ENCODE measurements at regions of chr11 and their contacts with region 1.

Region 1: DNA sequence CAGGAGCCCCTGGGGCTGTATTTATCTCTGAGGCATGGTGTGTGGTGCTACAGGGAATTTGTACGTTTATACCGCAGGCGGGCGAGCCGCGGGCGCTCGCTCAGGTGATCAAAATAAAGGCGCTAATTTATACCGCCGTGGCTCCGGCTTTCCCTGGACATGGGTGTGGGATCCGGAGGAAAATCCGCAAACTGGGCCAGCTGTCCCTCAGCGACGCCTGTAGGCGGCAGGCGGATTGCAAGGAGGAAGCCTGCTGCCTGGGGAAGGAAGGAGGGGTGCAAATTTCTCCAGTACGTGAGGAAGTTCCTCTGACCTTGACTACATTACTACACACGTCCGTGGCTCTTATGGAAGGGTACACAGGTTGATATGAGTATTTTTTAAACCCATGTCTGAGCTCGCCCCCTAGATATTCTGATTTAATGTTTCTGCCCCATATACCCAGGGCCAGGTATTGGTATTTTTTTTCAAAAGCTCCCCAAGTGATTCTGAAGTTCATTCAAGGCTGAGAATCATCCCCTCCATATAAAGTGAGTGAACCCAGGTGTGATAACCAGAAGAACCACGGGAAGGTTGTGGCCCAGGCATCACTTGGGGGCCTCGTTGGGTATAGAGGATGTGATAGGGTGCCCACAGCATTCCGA is 2.8 kb downstream of the MYOD1 start:
- DNase-seq: peak; percentile 38
- H3K27ac ChIP-seq: no peak overlapping the region
- CTCF ChIP-seq: no peak

Region 2: DNA sequence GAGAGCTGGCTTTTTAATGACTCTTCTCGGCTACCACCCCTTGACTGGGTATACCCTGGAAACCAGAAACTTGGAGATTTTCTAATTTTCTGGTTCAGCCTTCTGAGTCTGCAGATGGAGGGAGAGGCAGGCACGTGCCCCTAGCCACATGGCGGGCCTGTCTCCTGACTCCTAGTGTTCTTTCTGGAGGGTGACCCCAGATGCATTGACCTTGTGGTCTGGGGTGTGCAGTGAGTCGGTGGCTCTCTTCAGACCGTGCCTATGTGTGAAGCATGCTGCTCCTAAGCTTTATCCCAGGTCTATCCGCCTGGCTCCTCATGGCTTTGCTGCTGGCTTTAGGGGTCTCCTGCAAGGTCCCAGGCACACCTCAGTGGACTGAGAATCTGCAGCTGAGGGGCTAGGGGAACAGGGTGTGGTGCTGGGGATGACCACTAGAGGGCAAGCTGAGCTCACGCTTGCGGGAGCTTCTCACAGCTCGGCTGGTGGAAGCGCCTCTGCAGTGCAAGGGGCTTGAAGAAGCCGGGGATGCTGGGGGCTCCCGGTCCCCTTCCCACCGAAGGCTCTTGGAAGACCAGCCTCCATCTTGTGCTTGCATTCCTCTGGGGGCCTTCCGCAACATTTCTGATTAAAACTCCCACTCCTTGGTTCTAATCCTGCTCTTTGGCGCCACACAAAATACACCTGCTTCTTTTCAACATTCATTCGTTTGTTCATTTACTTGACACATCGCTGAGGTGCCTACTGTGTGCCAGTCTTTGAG is 123.2 kb before region 1 on chr11:
- CTCF ChIA-PET with region 1: interaction called, 31 read pairs
- POLR2A ChIA-PET with region 1: no interaction called
- DNase-seq: peak; percentile 65
- H3K27ac ChIP-seq: no peak overlapping the region
- CTCF ChIP-seq: peak; percentile 93

Region 3: GRCh38 chr11:17760102-17761029 is 38.2 kb after region 1 on chr11:
- CTCF ChIA-PET with region 1: no interaction called
- POLR2A ChIA-PET with region 1: no interaction called
- DNase-seq: peak; percentile 31
- H3K27ac ChIP-seq: no peak overlapping the region
- CTCF ChIP-seq: peak; percentile 16; the same call in 1 of the 2 replicates